H1 (cell line): ENCODE measurements at regions of chr19 and their contacts with region 1.

Region 1: GRCh38 chr19:34375598-34375997 is 10.6 kb downstream of the GPI start:
- DNase-seq: no peak
- H3K4me3 ChIP-seq: no peak overlapping the region
- H3K27ac ChIP-seq: no peak overlapping the region
- H3K4me1 ChIP-seq: no peaks in the 10 kb centered on the region
- H3K27me3 ChIP-seq: no peaks in the 10 kb centered on the region
- CTCF ChIP-seq: no peak
- EP300 ChIP-seq: no peak
- POLR2A ChIP-seq: no peak
- RAD21 ChIP-seq: no peak

Region 2: DNA sequence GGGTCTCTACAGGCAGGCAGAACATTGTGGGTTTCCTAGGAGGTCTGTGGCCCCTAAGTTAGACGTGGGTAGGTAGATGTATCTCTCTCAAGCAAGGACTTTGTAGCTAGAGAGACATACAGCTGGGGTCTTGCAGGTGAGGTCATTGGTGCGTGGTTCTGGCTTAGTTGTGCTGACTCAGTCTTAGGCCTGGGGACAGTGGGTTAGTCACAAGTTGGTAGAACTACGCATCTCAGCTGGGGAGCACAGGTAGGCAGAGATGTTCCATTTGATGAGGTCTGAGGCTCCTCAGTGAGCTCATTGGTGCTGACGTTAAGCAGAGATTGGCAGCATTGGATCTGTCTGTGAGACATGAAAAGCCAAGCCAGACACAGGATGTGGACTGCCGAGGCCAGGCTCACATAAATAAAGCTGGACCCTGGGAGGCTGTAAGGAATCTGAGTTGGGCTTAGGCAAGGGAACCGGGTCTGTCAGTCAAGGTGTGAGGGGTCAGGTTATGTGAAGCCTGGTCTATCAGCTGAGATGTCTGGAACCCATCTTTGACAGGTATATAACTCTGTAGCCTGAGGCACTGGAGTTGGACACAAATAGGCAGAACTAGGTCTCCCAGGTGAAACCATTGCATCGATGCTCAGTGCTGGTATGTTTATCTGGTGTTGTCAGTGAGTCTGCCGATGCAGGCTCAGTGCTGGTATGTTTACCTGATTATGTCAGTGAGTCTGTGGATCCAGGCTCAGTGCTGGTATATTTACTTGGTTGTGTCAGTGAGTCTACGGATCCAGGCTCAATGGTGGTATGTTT is 11.2 kb after region 1 on chr19:
- CTCF ChIA-PET with region 1: no interaction called
- POLR2A ChIA-PET with region 1: interaction called, 12 read pairs
- DNase-seq: no peak
- H3K4me3 ChIP-seq: no peak overlapping the region
- H3K27ac ChIP-seq: no peak overlapping the region
- H3K4me1 ChIP-seq: no peaks in the 10 kb centered on the region
- H3K27me3 ChIP-seq: no peaks in the 10 kb centered on the region
- CTCF ChIP-seq: no peak
- EP300 ChIP-seq: no peak
- POLR2A ChIP-seq: no peak
- RAD21 ChIP-seq: no peak

Region 3: DNA sequence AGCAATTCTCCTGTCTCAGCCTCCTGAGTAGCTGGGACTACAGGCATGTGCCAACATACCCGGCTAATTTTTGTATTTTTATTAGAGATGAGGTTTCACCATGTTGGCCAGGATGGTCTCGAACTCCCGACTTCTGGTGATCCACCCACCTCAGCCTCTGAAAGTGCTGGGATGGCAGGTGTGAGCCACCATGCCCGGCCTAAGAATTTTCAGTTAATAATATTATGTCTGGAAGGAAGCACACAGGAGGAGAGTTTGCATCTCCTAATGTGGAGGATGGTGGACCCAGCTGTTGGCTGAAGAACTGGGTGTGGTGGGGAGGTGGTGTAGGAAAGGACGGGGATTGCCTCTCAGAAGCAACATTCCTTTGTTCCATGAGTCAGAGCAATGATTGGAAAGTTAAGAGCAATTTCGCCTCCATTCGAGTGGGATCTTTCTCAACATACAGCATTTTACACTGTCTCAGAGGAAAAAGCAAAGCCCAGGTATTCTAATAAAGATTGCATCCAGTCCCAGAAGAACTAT is 40.5 kb after region 1 on chr19:
- CTCF ChIA-PET with region 1: no interaction called
- POLR2A ChIA-PET with region 1: no interaction called
- DNase-seq: no peak
- H3K4me3 ChIP-seq: no peak overlapping the region
- H3K27ac ChIP-seq: no peak overlapping the region
- H3K4me1 ChIP-seq: no peaks in the 10 kb centered on the region
- H3K27me3 ChIP-seq: no peaks in the 10 kb centered on the region
- CTCF ChIP-seq: no peak
- EP300 ChIP-seq: no peak
- POLR2A ChIP-seq: no peak
- RAD21 ChIP-seq: no peak

Region 4: GRCh38 chr19:34436716-34437115 is 61.1 kb after region 1 on chr19:
- CTCF ChIA-PET with region 1: no interaction called
- POLR2A ChIA-PET with region 1: no interaction called
- DNase-seq: no peak
- H3K4me3 ChIP-seq: no peak overlapping the region
- H3K27ac ChIP-seq: no peak overlapping the region
- H3K4me1 ChIP-seq: no peaks in the 10 kb centered on the region
- H3K27me3 ChIP-seq: no peaks in the 10 kb centered on the region
- CTCF ChIP-seq: no peak
- EP300 ChIP-seq: no peak
- POLR2A ChIP-seq: no peak
- RAD21 ChIP-seq: no peak